ENCODE measurements at regions of chr1 and their contacts with region 1.

Region 1: GRCh38 chr1:85276215-85276977 is at the start of gene BCL10:
- DNase-seq: peak; percentile 96 to 98 (median 97)
- H3K4me3 ChIP-seq: peak within 1 kb of the TSS; percentile 75 to 94
- H3K4me3 Mint-ChIP-seq: peak within 1 kb of the TSS; percentile 88 to 93 (median 92)
- H3K27ac ChIP-seq: peak within 1 kb of the TSS; percentile 94
- H3K27ac Mint-ChIP-seq: peak within 1 kb of the TSS; percentile 94 to 97 (median 96)
- H3K4me1 ChIP-seq: peaks cover 55% of the 10 kb centered on the region
- H3K4me1 Mint-ChIP-seq: peaks cover 42 to 62% (median 53%) of the 10 kb centered on the region in 4 donors
- H3K27me3 ChIP-seq: no peaks in the 10 kb centered on the region
- H3K27me3 Mint-ChIP-seq: no peaks in the 10 kb centered on the region
- total RNA-seq, gene BCL10: 36.1 to 37.0 TPM

Region 2: GRCh38 chr1:84506002-84506728 is 770.2 kb before region 1 on chr1 and contains the starts of genes GNG5 and SPATA1:
- CTCF ChIA-PET with region 1: no interaction called
- POLR2A ChIA-PET with region 1: interaction called, 4 read pairs
- intact Hi-C with region 1: loop called (anchors 1 kb)
- DNase-seq: peak; percentile 94 to 97 (median 96)
- H3K4me3 ChIP-seq: peak within 1 kb of the TSS; percentile 68 to 87
- H3K4me3 Mint-ChIP-seq: peak within 1 kb of the TSS; percentile 92 to 99 (median 98)
- H3K27ac ChIP-seq: peak within 1 kb of the TSS; percentile 81
- H3K27ac Mint-ChIP-seq: peak within 1 kb of the TSS; percentile 93 to 99 (median 97)
- H3K4me1 ChIP-seq: peaks cover 47% of the 10 kb centered on the region
- H3K4me1 Mint-ChIP-seq: peaks cover 28 to 55% (median 34%) of the 10 kb centered on the region in 4 donors
- H3K27me3 ChIP-seq: no peaks in the 10 kb centered on the region
- H3K27me3 Mint-ChIP-seq: no peaks in the 10 kb centered on the region
- total RNA-seq, gene GNG5: 38.1 to 45.5 TPM
- total RNA-seq, gene SPATA1: 1.7 to 3.4 TPM

Region 3: DNA sequence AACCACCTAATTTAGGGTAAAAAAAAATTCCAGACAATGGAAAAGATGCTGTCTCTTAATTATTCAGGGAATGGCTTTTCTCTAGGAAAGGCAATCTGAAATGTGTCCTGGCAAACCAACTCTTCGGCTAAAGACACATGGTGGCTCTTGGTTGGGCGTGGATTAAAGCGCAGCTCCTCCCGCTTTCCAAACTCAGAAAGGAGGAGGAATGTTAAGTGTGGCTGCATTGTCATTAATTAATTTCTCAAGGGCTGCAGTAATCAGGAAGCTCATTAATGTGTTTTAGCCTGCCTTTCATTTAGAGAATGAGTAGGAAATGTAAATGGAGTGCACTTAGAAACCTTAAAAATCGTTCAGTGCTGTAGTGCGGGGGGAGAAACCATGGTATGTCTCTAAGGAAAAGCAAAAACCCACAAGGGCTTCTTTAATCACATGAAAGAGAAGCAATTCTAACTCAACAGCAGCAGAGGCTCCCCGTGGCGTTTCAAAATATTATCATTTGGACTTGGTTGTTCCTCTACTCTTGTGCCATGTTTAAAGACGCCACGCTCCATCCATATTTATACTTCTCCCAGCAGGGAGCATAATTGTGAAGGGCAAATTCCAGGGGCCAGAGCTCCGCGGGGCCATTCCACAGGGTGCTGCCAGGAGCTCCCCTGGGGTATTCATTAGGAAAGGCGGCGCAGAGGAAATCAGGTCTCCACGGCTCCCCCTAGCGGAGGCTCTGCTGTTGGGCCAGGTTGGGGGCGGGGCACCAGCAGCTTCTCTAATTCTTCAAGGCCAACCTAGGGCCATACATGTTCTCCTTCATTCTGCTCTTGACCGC is 494.2 kb before region 1 on chr1:
- CTCF ChIA-PET with region 1: no interaction called
- POLR2A ChIA-PET with region 1: no interaction called
- intact Hi-C with region 1: loop called (anchors 10 kb)
- DNase-seq: peak; percentile 71 to 78 (median 75)
- H3K4me3 ChIP-seq: peak overlapping the region in 1 of 2 donors; percentile 28
- H3K4me3 Mint-ChIP-seq: peak overlapping the region; percentile 77 to 93 (median 87)
- H3K27ac ChIP-seq: no peak overlapping the region
- H3K27ac Mint-ChIP-seq: peak overlapping the region in 5 of 7 donors; percentile 7 to 82 (median 28)
- H3K4me1 ChIP-seq: peaks cover 9% of the 10 kb centered on the region
- H3K4me1 Mint-ChIP-seq: peaks cover 8 to 32% (median 22%) of the 10 kb centered on the region in 4 donors
- H3K27me3 ChIP-seq: no peaks in the 10 kb centered on the region
- H3K27me3 Mint-ChIP-seq: peaks cover 0 to 2% of the 10 kb centered on the region in 2 donors

Region 4: GRCh38 chr1:85200870-85201339 is 75.5 kb before region 1 on chr1 and contains the start of gene SYDE2:
- CTCF ChIA-PET with region 1: no interaction called
- POLR2A ChIA-PET with region 1: interaction called, 41 read pairs
- intact Hi-C with region 1: loop called (anchors 1 kb)
- DNase-seq: peak; percentile 84 to 89 (median 86)
- H3K4me3 ChIP-seq: peak within 1 kb of the TSS; percentile 72 to 73
- H3K4me3 Mint-ChIP-seq: peak within 1 kb of the TSS; percentile 96 to 99 (median 98)
- H3K27ac ChIP-seq: peak within 1 kb of the TSS; percentile 82
- H3K27ac Mint-ChIP-seq: peak within 1 kb of the TSS; percentile 97 to 99 (median 98)
- H3K4me1 ChIP-seq: peaks cover 27% of the 10 kb centered on the region
- H3K4me1 Mint-ChIP-seq: peaks cover 18 to 37% (median 27%) of the 10 kb centered on the region in 4 donors
- H3K27me3 ChIP-seq: no peaks in the 10 kb centered on the region
- H3K27me3 Mint-ChIP-seq: peaks cover 2 to 3% of the 10 kb centered on the region in 2 donors
- total RNA-seq, gene SYDE2: 5.0 to 5.2 TPM

Region 5: GRCh38 chr1:85297855-85298629 is 21.6 kb after region 1 on chr1:
- CTCF ChIA-PET with region 1: no interaction called
- POLR2A ChIA-PET with region 1: interaction called, 28 read pairs
- intact Hi-C with region 1: loop called (anchors 1 kb)
- DNase-seq: peak; percentile 50 to 85 (median 60)
- H3K4me3 ChIP-seq: no peak overlapping the region
- H3K4me3 Mint-ChIP-seq: peak overlapping the region in 7 of 8 donors; percentile 39 to 67 (median 55)
- H3K27ac ChIP-seq: no peak overlapping the region
- H3K27ac Mint-ChIP-seq: peak overlapping the region; percentile 23 to 77 (median 62)
- H3K4me1 ChIP-seq: peaks cover 16% of the 10 kb centered on the region
- H3K4me1 Mint-ChIP-seq: peaks cover 14 to 27% (median 18%) of the 10 kb centered on the region in 4 donors
- H3K27me3 ChIP-seq: no peaks in the 10 kb centered on the region
- H3K27me3 Mint-ChIP-seq: peaks cover 0 to 1% of the 10 kb centered on the region in 2 donors

Region 6: DNA sequence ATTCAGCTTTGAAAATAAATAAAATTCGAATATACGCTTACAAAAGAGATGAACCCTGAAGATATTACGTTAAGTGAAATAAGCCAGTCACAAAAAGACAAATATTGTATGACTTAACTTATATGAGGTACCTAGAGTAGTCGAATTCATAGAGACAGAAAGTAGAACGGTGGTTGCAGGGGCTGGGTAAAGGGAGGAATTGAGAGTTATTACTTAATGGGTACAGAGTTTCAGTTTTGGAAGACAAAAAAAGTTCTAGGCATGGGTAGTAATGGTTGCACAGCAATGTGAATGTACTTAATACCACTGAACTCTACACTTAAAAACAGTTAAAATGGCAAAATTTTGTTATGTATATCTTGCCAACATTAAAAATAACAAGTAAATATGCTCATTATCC is 480.5 kb after region 1 on chr1:
- CTCF ChIA-PET with region 1: no interaction called
- POLR2A ChIA-PET with region 1: no interaction called
- intact Hi-C with region 1: no loop called
- DNase-seq: no peak
- H3K4me3 ChIP-seq: no peak overlapping the region
- H3K4me3 Mint-ChIP-seq: no peak overlapping the region
- H3K27ac ChIP-seq: no peak overlapping the region
- H3K27ac Mint-ChIP-seq: no peak overlapping the region
- H3K4me1 ChIP-seq: no peaks in the 10 kb centered on the region
- H3K4me1 Mint-ChIP-seq: no peaks in the 10 kb centered on the region
- H3K27me3 ChIP-seq: no peaks in the 10 kb centered on the region
- H3K27me3 Mint-ChIP-seq: no peaks in the 10 kb centered on the region

Region 7: GRCh38 chr1:86395771-86396497 is 1119.5 kb after region 1 on chr1 and contains the start of gene ODF2L:
- CTCF ChIA-PET with region 1: no interaction called
- POLR2A ChIA-PET with region 1: no interaction called
- intact Hi-C with region 1: loop called (anchors 5 kb)
- DNase-seq: peak; percentile 90 to 94 (median 92)
- H3K4me3 ChIP-seq: peak within 1 kb of the TSS; percentile 77 to 87
- H3K4me3 Mint-ChIP-seq: peak within 1 kb of the TSS; percentile 94 to 99 (median 98)
- H3K27ac ChIP-seq: peak within 1 kb of the TSS; percentile 92
- H3K27ac Mint-ChIP-seq: peak within 1 kb of the TSS; percentile 97 to 100 (median 99)
- H3K4me1 ChIP-seq: peaks cover 56% of the 10 kb centered on the region
- H3K4me1 Mint-ChIP-seq: peaks cover 43 to 68% (median 51%) of the 10 kb centered on the region in 4 donors
- H3K27me3 ChIP-seq: no peaks in the 10 kb centered on the region
- H3K27me3 Mint-ChIP-seq: no peaks in the 10 kb centered on the region
- total RNA-seq, gene ODF2L: 97.3 to 98.3 TPM

Measured in CD4-positive, alpha-beta memory T cell (primary cell).